WTC11 (cell line): ENCODE measurements at regions of chr2 and their contacts with region 1.

Region 1: GRCh38 chr2:227766373-227766883 is 20.7 kb downstream of the SCYGR8 start:
- DNase-seq: peak; percentile 84
- ATAC-seq: peak; percentile 97
- H3K4me3 Mint-ChIP-seq: no peak overlapping the region
- H3K27ac Mint-ChIP-seq: no peak overlapping the region
- H3K4me1 Mint-ChIP-seq: peaks cover 6% of the 10 kb centered on the region
- H3K27me3 Mint-ChIP-seq: no peaks in the 10 kb centered on the region
- CTCF ChIP-seq: peak; percentile 78

Region 2: DNA sequence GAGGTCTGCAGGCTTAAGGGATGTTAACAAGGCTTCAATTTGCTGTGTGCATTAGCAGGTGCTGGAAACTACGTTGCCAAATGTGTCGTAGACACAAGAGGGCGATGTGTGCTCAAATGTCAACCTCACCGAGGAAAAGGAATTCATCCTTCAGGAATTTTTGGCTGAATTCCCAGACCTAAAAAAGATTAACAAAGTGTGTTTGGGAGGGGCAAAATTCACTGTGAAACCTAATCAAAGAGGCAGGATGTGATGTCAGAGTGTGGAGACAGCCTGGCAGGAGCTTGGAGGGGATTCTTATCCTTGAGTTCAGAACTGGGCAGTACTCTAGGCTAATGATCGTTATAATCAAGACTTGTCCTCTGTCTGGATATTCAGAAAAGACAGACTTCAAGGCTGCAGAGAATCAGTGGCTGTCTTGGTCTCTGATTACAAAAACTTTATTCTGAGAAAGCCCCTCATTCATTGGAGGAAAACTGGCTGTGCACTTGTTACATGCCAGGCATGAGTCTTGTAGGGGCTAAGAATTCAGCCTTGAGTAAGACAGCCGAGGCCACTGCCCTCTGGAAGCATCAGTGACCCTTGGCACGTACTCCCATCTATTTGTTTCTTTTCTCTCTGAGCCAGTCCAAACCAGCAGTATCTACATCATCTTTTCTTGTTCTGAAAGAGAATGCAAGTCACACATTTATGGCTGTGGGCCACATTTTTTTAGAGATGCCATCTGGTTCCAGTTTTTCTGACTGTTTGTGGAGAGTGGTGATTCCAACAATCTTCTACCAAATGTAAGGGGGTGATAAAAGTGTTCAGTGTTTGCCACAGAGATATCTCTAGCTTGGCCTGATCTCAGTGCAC is 360.0 kb before region 1 on chr2:
- CTCF ChIA-PET with region 1: interaction called, 12 read pairs
- POLR2A ChIA-PET with region 1: no interaction called
- DNase-seq: peak; percentile 59
- ATAC-seq: peak; percentile 91
- H3K4me3 Mint-ChIP-seq: no peak overlapping the region
- H3K27ac Mint-ChIP-seq: no peak overlapping the region
- H3K4me1 Mint-ChIP-seq: peaks cover 11% of the 10 kb centered on the region
- H3K27me3 Mint-ChIP-seq: no peaks in the 10 kb centered on the region
- CTCF ChIP-seq: peak; percentile 23; the same call in 1 of the 2 replicates

Region 3: GRCh38 chr2:227602358-227602757 is 164.1 kb before region 1 on chr2:
- CTCF ChIA-PET with region 1: interaction called, 17 read pairs
- POLR2A ChIA-PET with region 1: no interaction called
- DNase-seq: no peak
- ATAC-seq: no peak
- H3K4me3 Mint-ChIP-seq: no peak overlapping the region
- H3K27ac Mint-ChIP-seq: no peak overlapping the region
- H3K4me1 Mint-ChIP-seq: peaks cover 11% of the 10 kb centered on the region
- H3K27me3 Mint-ChIP-seq: no peaks in the 10 kb centered on the region
- CTCF ChIP-seq: no peak

Region 4: GRCh38 chr2:227643990-227644551 is 122.4 kb before region 1 on chr2:
- CTCF ChIA-PET with region 1: interaction called, 10 read pairs
- POLR2A ChIA-PET with region 1: no interaction called
- DNase-seq: no peak
- ATAC-seq: peak; percentile 51; the same call in 1 of the 2 replicates
- H3K4me3 Mint-ChIP-seq: no peak overlapping the region
- H3K27ac Mint-ChIP-seq: no peak overlapping the region
- H3K4me1 Mint-ChIP-seq: no peaks in the 10 kb centered on the region
- H3K27me3 Mint-ChIP-seq: no peaks in the 10 kb centered on the region
- CTCF ChIP-seq: no peak

Region 5: GRCh38 chr2:227655454-227655853 is 111.0 kb before region 1 on chr2:
- CTCF ChIA-PET with region 1: interaction called, 89 read pairs
- POLR2A ChIA-PET with region 1: interaction called, 7 read pairs
- DNase-seq: no peak
- ATAC-seq: no peak
- H3K4me3 Mint-ChIP-seq: no peak overlapping the region
- H3K27ac Mint-ChIP-seq: no peak overlapping the region
- H3K4me1 Mint-ChIP-seq: no peaks in the 10 kb centered on the region
- H3K27me3 Mint-ChIP-seq: no peaks in the 10 kb centered on the region
- CTCF ChIP-seq: no peak

Region 6: GRCh38 chr2:227661019-227661649 is 105.3 kb before region 1 on chr2:
- CTCF ChIA-PET with region 1: interaction called, 89 read pairs
- POLR2A ChIA-PET with region 1: interaction called, 7 read pairs
- DNase-seq: peak; percentile 38
- ATAC-seq: peak; percentile 86
- H3K4me3 Mint-ChIP-seq: no peak overlapping the region
- H3K27ac Mint-ChIP-seq: no peak overlapping the region
- H3K4me1 Mint-ChIP-seq: peaks cover 17% of the 10 kb centered on the region
- H3K27me3 Mint-ChIP-seq: peaks cover 4% of the 10 kb centered on the region
- CTCF ChIP-seq: no peak

Region 7: DNA sequence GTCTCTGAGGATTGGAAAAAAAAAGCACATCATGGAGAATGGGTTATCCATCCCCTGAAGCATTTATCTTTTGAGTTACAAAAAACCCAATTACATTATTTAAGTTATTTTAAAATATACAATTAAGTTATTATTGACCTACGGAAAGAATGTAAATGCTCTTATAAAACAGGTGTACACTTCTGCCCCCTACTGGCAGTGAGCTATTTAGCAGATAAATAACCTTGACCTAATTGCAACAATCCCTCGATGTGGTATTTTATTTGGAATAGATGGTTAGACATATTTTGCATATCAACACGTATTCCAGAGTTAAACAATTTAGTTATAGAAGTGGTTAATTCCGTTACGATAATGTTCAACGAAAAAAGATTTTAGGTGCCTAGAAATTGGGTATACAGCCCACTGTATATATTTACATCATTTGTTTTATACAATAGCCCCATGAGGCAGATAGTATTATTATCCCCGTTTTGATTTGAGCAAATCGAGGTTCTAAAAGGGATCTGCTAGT is 95.9 kb after region 1 on chr2:
- CTCF ChIA-PET with region 1: interaction called, 14 read pairs
- POLR2A ChIA-PET with region 1: no interaction called
- DNase-seq: no peak
- ATAC-seq: no peak
- H3K4me3 Mint-ChIP-seq: no peak overlapping the region
- H3K27ac Mint-ChIP-seq: no peak overlapping the region
- H3K4me1 Mint-ChIP-seq: peaks cover 26% of the 10 kb centered on the region
- H3K27me3 Mint-ChIP-seq: no peaks in the 10 kb centered on the region
- CTCF ChIP-seq: peak; percentile 72